Tibial artery (tissue), 4 donors: ENCODE measurements at regions of chr14 and their contacts with region 1.

Region 1: GRCh38 chr14:35046048-35046741 is at the start of gene FAM177A1:
- DNase-seq: peak; percentile 97 to 99
- H3K4me3 ChIP-seq: peak within 1 kb of the TSS; percentile 70 to 82
- H3K27ac ChIP-seq: peak within 1 kb of the TSS; percentile 96 to 97
- H3K4me1 ChIP-seq: peaks cover 0 to 47% (median 21%) of the 10 kb centered on the region in 4 donors
- H3K27me3 ChIP-seq: no peaks in the 10 kb centered on the region
- CTCF ChIP-seq: no peak

Region 2: GRCh38 chr14:34875031-34875922 is 170.9 kb before region 1 on chr14 and contains the start of gene BAZ1A:
- intact Hi-C with region 1: loop called (anchors 5 kb)
- DNase-seq: peak; percentile 57 to 82
- H3K4me3 ChIP-seq: peak within 1 kb of the TSS; percentile 72 to 92
- H3K27ac ChIP-seq: peak within 1 kb of the TSS; percentile 98 to 99
- H3K4me1 ChIP-seq: peaks cover 0 to 8% (median 3%) of the 10 kb centered on the region in 4 donors
- H3K27me3 ChIP-seq: no peaks in the 10 kb centered on the region
- CTCF ChIP-seq: peak; percentile 21 to 28

Region 3: DNA sequence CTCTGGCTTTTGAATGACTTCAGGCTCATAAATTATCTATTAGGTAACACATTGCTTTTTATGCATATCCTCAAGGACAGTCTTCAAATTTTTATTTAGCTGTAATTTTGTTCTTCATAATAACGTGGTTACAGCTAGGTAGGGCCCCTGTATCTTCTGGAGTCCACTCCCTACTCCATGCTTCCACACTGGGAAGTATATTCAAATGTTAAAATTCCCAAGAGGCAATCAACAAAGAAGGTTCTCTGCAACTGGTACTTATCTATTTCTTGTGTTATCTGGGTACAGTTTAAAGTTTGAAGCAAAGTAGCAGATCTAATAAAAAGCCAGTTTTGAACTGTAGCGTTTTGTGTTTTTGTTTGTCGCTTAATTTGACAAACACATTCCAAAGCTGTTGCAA is 150.9 kb before region 1 on chr14:
- intact Hi-C with region 1: no loop called
- DNase-seq: no peak
- H3K4me3 ChIP-seq: no peak overlapping the region
- H3K27ac ChIP-seq: no peak overlapping the region
- H3K4me1 ChIP-seq: no peaks in the 10 kb centered on the region
- H3K27me3 ChIP-seq: no peaks in the 10 kb centered on the region
- CTCF ChIP-seq: no peak

Region 4: DNA sequence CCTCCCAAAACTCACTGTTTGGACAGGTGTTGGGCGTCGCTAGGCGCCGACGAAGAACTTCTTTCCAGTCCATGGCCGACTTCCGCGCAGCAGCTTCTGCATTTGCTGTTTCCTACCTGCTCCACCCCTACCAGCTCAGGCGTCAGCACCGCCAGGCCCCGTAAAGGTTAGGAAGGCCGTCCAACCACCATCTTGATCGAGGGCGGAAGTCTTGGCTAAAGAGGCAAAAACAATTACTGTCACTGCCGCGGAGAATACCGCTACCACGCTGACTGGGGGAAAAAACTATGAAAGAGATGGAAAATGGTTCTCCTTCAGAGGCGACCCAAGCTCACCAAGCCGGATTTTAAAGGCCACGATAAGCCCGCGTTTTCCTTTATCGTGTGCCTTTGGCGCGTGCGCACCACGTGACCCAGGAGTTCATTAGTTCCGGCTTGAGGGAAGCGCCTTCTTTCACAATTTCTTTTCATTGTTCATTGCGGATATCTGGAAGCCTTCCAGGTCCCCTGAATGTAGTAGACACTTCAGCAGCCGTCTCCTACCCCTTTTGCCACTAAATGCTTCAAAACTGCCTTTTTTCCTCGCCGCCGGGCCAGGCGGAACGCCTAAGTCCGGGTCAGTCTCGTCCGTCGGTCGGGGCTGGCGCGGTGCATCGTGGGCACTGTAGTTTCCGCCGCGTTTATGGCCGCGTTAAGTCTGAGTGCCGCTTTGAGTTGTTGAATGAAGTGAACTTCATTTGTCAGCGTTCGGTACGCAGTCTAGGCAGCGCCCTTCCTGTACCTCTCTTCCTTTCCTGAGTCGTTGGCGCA is 75.9 kb after region 1 on chr14 and contains the starts of genes PPP2R3C and PRORP:
- intact Hi-C with region 1: loop called (anchors 5 kb)
- DNase-seq: peak; percentile 95 to 96
- H3K4me3 ChIP-seq: peak within 1 kb of the TSS; percentile 61 to 66
- H3K27ac ChIP-seq: peak within 1 kb of the TSS; percentile 85 to 93
- H3K4me1 ChIP-seq: peaks cover 3 to 49% (median 25%) of the 10 kb centered on the region in 4 donors
- H3K27me3 ChIP-seq: no peaks in the 10 kb centered on the region
- CTCF ChIP-seq: no peak

Region 5: DNA sequence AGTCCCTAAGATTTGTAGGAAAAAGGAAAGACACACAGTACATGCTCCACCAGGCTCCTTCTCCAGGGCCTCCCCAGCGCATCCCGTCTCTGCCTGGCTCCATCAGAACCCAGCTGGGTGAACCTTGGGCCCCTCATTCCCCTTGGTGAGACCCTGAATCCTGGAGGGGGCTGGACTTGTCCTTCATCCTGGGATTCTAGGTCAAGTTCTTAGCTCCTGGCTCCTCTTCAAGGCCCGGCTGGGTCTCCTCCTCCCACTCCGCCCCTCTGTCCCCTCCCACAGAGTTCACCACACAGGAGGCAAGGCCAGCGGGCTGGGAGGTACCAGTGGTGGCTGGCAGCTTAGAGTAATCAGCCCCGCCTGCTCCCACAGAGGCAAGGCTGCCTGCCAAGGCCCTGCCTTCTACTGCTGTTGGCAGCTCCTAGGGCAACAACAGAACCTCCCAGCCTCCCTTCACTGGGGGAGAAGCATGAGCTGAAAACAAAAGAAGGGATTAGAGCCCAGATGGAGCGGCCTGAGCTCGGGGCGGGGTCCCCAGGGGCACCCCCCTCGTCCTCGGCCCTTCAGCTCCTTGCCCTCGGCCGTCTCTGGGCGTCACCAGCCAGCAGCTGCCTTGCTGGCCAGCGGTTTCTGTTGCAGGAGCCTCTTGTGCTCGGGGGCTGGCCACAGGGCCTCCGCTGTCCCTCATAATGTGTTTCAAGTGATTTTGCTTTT is 295.4 kb after region 1 on chr14:
- intact Hi-C with region 1: loop called (anchors 10 kb)
- DNase-seq: peak; percentile 99 to 100
- H3K4me3 ChIP-seq: peak overlapping the region; percentile 48 to 51
- H3K27ac ChIP-seq: peak overlapping the region; percentile 92 to 98
- H3K4me1 ChIP-seq: peaks cover 15 to 65% (median 47%) of the 10 kb centered on the region in 4 donors
- H3K27me3 ChIP-seq: no peaks in the 10 kb centered on the region
- CTCF ChIP-seq: no peak